Activated naive CD4-positive, alpha-beta T cell treated with anti-CD3 and anti-CD28 coated beads for 36 hours (primary cell): ENCODE measurements at regions of chr7 and their contacts with region 1.

Region 1: DNA sequence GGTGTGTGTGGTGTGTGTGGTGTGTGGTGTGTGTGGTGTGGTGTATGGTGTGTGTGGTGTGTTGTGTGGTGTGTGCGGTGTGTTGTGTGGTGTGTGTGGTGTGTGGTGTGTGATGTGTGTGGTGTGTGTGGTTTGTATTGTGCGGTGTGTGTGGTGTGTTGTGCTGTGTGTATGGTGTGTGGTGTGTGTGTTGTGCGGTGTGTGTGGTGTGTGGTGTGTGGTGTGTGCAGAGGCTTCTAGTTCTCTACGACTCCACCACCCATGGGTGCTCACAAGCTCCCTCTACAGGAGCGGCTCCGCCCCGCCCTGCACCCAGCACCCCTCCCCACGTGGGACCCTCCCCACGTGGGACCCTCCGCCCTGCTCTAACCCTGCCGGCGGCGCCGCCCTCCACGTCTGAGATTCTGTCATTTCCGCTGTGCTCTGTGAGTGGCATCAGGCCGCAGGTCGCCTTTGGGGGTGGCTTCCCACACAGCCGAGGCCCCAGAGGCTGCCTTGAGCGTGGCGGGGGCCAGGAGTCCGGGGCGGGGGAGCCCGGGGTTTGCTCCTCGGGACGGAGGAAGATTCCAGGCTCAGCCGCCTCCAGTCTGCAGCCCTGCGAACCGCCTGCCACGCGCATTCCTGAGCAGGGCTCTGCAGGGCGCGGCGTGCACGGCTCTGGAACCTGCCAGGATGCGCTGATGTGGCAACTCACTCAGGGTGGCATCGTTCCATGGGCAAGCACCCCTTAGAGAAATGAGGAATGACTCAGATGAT is 37.0 kb upstream of the DNAJB6 start:
- DNase-seq: no peak
- H3K4me3 Mint-ChIP-seq: no peak overlapping the region
- H3K27ac Mint-ChIP-seq: no peak overlapping the region
- H3K4me1 Mint-ChIP-seq: peaks cover 32% of the 10 kb centered on the region
- H3K27me3 Mint-ChIP-seq: no peaks in the 10 kb centered on the region

Region 2: DNA sequence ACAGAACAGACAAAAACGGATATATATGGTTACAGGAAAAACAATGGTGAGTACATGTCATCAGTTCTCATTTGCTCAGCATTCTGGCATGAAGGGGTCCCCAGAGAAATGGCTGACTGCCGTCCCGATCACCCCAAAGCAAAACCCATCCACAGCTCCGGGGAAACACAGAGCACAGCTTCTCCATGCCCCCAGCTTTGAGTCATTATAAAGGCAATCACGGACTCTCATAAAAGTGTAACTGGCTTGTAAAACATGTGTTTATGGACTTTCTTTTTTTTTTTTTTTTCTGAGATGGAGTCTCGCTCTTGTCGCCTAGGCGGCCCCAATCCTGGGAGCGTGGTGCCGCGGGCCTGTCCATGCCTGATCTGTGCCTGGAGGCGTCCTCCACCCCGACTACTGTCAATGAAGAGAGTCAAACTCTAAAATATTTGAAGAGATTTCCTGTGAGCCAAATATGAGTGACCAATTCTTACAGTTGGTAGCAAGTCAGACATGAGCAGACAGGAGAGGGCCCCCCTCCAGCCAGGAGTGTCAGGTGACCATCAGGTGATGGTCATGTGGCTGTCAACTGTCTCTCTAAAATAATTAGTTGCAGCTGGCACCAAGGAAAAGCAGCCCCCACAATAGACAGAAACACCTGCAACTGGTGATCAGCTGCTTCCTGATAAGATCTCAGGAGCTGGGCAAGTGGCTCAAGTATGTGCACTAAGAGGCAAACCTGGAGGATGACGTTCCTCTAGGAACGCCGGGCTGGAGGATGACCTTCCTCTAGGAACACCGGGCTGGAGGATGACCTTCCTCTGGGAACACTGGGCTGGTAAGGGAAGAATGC is 372.0 kb before region 1 on chr7:
- CTCF ChIA-PET with region 1: no interaction called
- intact Hi-C with region 1: loop called (anchors 1 kb)
- DNase-seq: no peak
- H3K4me3 Mint-ChIP-seq: no peak overlapping the region
- H3K27ac Mint-ChIP-seq: no peak overlapping the region
- H3K4me1 Mint-ChIP-seq: peaks cover 19% of the 10 kb centered on the region
- H3K27me3 Mint-ChIP-seq: no peaks in the 10 kb centered on the region

Region 3: DNA sequence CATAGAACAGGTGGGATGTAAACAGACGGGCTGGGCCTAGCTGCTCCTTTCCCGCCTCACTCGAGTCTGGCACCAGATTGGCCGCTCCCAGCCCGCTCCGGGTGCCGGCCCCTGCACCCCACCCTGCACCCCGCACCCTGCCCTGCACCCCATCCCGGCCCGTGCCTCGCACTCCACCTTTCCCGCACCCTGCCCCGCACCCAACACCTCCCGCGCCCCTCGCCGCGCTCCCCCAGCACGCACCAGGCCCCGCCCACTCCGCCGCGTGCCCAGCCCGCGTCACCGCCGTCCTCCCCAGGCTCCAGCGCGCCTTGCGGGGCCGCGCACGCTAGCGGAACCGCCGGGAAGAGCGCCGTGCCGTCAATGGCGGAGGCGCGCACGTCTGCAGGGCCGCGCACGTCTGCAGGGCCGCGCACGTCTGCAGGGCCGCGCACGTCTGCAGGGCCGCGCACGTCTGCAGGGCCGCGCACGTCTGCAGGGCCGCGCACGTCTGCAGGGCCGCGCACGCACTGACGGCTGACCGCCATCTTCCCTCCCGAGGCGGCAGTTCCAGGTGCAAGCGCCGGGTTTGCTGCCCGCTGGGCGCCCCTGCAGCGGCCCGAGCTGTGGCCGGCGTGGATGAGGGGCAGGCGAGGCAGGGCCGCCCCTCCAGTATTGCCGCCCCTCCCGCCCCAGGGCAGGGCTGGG is 161.2 kb before region 1 on chr7 and contains the start of gene UBE3C:
- CTCF ChIA-PET with region 1: no interaction called
- intact Hi-C with region 1: loop called (anchors 1 kb)
- DNase-seq: peak; percentile 87
- H3K4me3 Mint-ChIP-seq: peak within 1 kb of the TSS; percentile 84
- H3K27ac Mint-ChIP-seq: peak within 1 kb of the TSS; percentile 92
- H3K4me1 Mint-ChIP-seq: peaks cover 38% of the 10 kb centered on the region
- H3K27me3 Mint-ChIP-seq: no peaks in the 10 kb centered on the region
- total RNA-seq, gene UBE3C: 52.9 to 55.7 TPM

Region 4: DNA sequence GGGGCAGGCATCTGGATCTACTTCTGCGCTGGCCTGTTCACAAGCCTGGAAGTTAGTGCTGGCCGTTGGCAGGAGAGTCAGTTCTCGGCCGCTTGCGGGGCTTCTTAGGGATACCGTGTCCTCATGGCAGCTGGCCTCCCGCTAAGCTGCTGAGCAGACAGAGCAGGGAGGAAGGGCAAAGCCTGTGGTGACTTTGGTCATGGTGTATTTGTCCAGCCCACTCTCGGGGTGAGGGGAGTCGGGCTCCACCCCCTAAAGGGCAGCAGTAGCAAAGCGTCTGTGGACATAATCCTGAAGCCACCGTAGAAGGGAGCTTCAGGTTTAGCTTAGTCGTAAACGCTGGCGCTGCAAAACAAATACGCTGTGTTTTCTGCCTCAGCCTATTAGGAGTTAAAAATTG is 148.9 kb before region 1 on chr7:
- CTCF ChIA-PET with region 1: no interaction called
- intact Hi-C with region 1: no loop called
- DNase-seq: no peak
- H3K4me3 Mint-ChIP-seq: no peak overlapping the region
- H3K27ac Mint-ChIP-seq: no peak overlapping the region
- H3K4me1 Mint-ChIP-seq: peaks cover 65% of the 10 kb centered on the region
- H3K27me3 Mint-ChIP-seq: no peaks in the 10 kb centered on the region

Region 5: GRCh38 chr7:157238087-157238486 is 61.7 kb before region 1 on chr7:
- CTCF ChIA-PET with region 1: no interaction called
- intact Hi-C with region 1: no loop called
- DNase-seq: no peak
- H3K4me3 Mint-ChIP-seq: no peak overlapping the region
- H3K27ac Mint-ChIP-seq: no peak overlapping the region
- H3K4me1 Mint-ChIP-seq: peaks cover 3% of the 10 kb centered on the region
- H3K27me3 Mint-ChIP-seq: no peaks in the 10 kb centered on the region

Region 6: GRCh38 chr7:157490457-157490912 is 190.7 kb after region 1 on chr7:
- CTCF ChIA-PET with region 1: no interaction called
- intact Hi-C with region 1: loop called (anchors 1 kb)
- DNase-seq: peak; percentile 63
- H3K4me3 Mint-ChIP-seq: no peak overlapping the region
- H3K27ac Mint-ChIP-seq: peak overlapping the region; percentile 36
- H3K4me1 Mint-ChIP-seq: peaks cover 30% of the 10 kb centered on the region
- H3K27me3 Mint-ChIP-seq: peaks cover 8% of the 10 kb centered on the region